Natural killer cell (primary cell): ENCODE measurements at regions of chr9 and their contacts with region 1.

Region 1: DNA sequence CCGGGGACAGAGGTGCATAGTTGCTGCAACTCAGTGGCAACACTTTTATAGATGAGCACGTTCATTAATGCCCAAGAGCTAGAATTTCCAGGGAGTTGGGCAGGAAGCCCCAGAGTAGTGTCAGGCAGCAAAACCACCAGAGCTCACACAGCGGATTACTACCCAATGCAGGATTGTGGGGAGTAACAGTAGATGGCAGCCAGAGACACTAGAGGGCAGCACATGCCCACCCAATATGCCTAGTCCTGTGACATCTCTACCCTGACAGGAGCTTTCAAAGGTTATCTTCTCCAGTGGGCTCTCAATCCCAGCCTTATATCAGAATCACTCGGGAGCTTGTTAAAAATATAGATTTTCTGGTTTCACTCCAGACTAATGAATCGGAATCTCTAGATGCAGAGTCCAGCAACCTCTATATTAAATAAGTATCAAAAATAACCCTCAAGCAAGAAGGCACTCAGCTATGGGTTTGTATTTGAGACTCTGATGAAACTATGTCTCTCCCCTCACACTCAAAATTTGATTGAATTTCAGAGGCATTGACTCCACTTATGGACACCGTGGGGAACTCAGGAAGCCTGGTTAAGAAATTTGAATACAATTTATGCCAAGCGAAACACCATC is 58.4 kb upstream of the PHF24 start:
- DNase-seq: peak; percentile 68 to 91
- ATAC-seq: peak; percentile 96 to 100 (median 100)
- H3K4me3 ChIP-seq: no peak overlapping the region
- H3K4me3 Mint-ChIP-seq: no peak overlapping the region
- H3K27ac ChIP-seq: no peak overlapping the region
- H3K27ac Mint-ChIP-seq: no peak overlapping the region
- H3K4me1 ChIP-seq: no peaks in the 10 kb centered on the region
- H3K4me1 Mint-ChIP-seq: no peaks in the 10 kb centered on the region
- H3K27me3 ChIP-seq: no peaks in the 10 kb centered on the region
- H3K27me3 Mint-ChIP-seq: peaks cover 15 to 41% of the 10 kb centered on the region in 2 donors
- CTCF ChIP-seq: peak; percentile 81

Region 2: DNA sequence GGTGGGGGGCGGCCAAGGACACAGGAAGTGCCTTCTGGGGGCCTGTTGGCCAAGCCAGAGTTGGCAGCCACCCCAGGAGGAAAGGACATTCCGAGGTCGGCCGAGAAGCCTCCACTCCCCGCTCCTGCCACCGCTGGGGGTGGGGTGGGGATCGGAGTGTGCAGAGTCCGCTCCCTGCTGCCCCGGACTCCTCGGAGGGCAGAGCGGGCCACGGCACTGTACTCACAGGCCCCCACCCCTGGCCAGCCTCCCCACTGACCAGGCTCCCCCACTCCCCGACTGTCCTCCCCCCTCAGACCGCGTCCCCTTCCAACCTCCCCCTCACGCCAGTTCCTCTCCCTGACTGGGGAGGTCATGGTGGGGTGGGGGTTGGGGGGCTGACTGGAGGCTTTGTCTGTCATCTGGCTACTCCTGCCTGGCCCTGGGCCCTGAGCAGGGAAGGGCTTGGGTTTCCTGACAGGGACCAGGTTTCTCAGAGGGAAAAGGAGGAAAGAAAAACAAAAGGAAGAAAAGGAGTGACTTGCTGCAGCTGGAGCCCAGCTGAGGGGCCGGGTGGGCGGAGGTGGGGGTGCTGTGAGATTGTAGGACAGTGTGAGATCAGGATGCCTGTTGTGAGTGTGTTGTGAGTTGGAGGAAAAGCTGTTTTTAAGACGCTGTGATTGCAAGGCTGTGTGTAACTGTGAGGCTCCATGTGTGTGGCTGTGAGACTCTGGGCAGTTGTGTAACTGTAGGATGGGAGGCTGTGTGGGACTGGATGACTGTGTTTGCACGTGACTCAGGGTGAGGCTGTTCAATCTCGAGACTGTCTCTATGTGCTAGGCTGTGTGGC is 339.8 kb before region 1 on chr9:
- intact Hi-C with region 1: no loop called
- DNase-seq: no peak
- ATAC-seq: no peak
- H3K4me3 ChIP-seq: no peak overlapping the region
- H3K4me3 Mint-ChIP-seq: no peak overlapping the region
- H3K27ac ChIP-seq: no peak overlapping the region
- H3K27ac Mint-ChIP-seq: no peak overlapping the region
- H3K4me1 ChIP-seq: no peaks in the 10 kb centered on the region
- H3K4me1 Mint-ChIP-seq: no peaks in the 10 kb centered on the region
- H3K27me3 ChIP-seq: peaks cover 3% of the 10 kb centered on the region
- H3K27me3 Mint-ChIP-seq: peaks cover 7 to 41% of the 10 kb centered on the region in 2 donors
- CTCF ChIP-seq: no peak

Region 3: GRCh38 chr9:34989003-34989945 is 89.6 kb after region 1 on chr9 and contains the start of gene DNAJB5:
- intact Hi-C with region 1: loop called (anchors 1 kb)
- DNase-seq: peak; percentile 99
- ATAC-seq: peak; percentile 94 to 99 (median 96)
- H3K4me3 ChIP-seq: peak within 1 kb of the TSS; percentile 73
- H3K4me3 Mint-ChIP-seq: peak within 1 kb of the TSS; percentile 98
- H3K27ac ChIP-seq: peak within 1 kb of the TSS; percentile 45
- H3K27ac Mint-ChIP-seq: peak within 1 kb of the TSS; percentile 83 to 84
- H3K4me1 ChIP-seq: peaks cover 35% of the 10 kb centered on the region
- H3K4me1 Mint-ChIP-seq: peaks cover 27 to 36% of the 10 kb centered on the region in 2 donors
- H3K27me3 ChIP-seq: no peaks in the 10 kb centered on the region
- H3K27me3 Mint-ChIP-seq: peaks cover 0 to 2% of the 10 kb centered on the region in 2 donors
- CTCF ChIP-seq: no peak
- total RNA-seq, gene DNAJB5: 1.1 to 2.4 (median 1.9) TPM

Region 4: GRCh38 chr9:35051069-35051967 is 151.7 kb after region 1 on chr9:
- intact Hi-C with region 1: loop called (anchors 1 kb)
- DNase-seq: peak in 1 of 2 donors; percentile 72
- ATAC-seq: peak; percentile 60 to 87 (median 69)
- H3K4me3 ChIP-seq: no peak overlapping the region
- H3K4me3 Mint-ChIP-seq: no peak overlapping the region
- H3K27ac ChIP-seq: no peak overlapping the region
- H3K27ac Mint-ChIP-seq: peak overlapping the region; percentile 21 to 58
- H3K4me1 ChIP-seq: no peaks in the 10 kb centered on the region
- H3K4me1 Mint-ChIP-seq: peaks cover 6 to 9% of the 10 kb centered on the region in 2 donors
- H3K27me3 ChIP-seq: no peaks in the 10 kb centered on the region
- H3K27me3 Mint-ChIP-seq: no peaks in the 10 kb centered on the region
- CTCF ChIP-seq: peak; percentile 69

Region 5: GRCh38 chr9:35096035-35096849 is 196.6 kb after region 1 on chr9 and contains the start of gene PIGO:
- intact Hi-C with region 1: loop called (anchors 1 kb)
- DNase-seq: peak; percentile 85 to 94
- ATAC-seq: peak; percentile 93 to 97 (median 94)
- H3K4me3 ChIP-seq: peak within 1 kb of the TSS; percentile 83
- H3K4me3 Mint-ChIP-seq: peak within 1 kb of the TSS; percentile 86
- H3K27ac ChIP-seq: peak within 1 kb of the TSS; percentile 95
- H3K27ac Mint-ChIP-seq: peak within 1 kb of the TSS; percentile 91 to 93
- H3K4me1 ChIP-seq: peaks cover 15% of the 10 kb centered on the region
- H3K4me1 Mint-ChIP-seq: peaks cover 19 to 37% of the 10 kb centered on the region in 2 donors
- H3K27me3 ChIP-seq: no peaks in the 10 kb centered on the region
- H3K27me3 Mint-ChIP-seq: no peaks in the 10 kb centered on the region
- CTCF ChIP-seq: peak; percentile 87
- total RNA-seq, gene PIGO: 23.6 to 28.2 (median 27.7) TPM

Region 6: DNA sequence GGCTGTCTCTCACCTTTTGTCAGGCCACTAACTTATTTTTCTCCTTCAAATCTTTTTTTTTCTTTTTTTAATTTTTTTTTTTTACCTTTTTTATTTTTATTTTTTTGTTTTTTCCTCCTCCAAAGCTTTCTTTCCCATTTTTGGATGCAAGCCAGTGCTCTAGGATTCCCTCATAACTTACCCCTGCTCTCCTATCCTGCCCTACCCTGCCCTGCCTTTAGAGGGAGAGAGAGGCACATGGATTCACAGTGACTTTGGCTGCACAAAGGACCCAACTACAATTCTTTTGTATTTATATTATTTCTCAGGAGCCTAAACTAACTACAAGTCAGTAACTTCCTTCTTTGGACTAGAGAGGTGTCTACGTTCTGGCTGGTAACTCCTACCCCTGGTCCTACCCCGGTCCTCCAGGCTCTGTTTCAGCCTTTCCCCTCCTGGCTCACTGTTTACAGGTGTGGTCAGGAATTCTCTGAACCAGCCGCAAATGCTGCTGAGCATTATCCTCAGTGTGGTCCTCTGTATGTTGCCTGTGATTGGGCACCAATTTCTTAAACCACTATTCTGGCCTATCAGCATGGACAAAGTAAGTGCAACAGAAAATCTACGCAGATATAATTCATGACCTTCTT is 581.8 kb after region 1 on chr9:
- intact Hi-C with region 1: loop called (anchors 1 kb)
- DNase-seq: peak in 1 of 2 donors; percentile 34
- ATAC-seq: peak in 1 of 3 donors; percentile 55
- H3K4me3 ChIP-seq: no peak overlapping the region
- H3K4me3 Mint-ChIP-seq: no peak overlapping the region
- H3K27ac ChIP-seq: no peak overlapping the region
- H3K27ac Mint-ChIP-seq: no peak overlapping the region
- H3K4me1 ChIP-seq: no peaks in the 10 kb centered on the region
- H3K4me1 Mint-ChIP-seq: no peaks in the 10 kb centered on the region
- H3K27me3 ChIP-seq: peaks cover 7% of the 10 kb centered on the region
- H3K27me3 Mint-ChIP-seq: peaks cover 4 to 15% of the 10 kb centered on the region in 2 donors
- CTCF ChIP-seq: peak; percentile 12

Region 7: GRCh38 chr9:35553670-35554543 is 654.3 kb after region 1 on chr9:
- intact Hi-C with region 1: loop called (anchors 10 kb)
- DNase-seq: peak in 1 of 2 donors; percentile 57
- ATAC-seq: peak in 2 of 3 donors; percentile 70 to 73
- H3K4me3 ChIP-seq: no peak overlapping the region
- H3K4me3 Mint-ChIP-seq: no peak overlapping the region
- H3K27ac ChIP-seq: no peak overlapping the region
- H3K27ac Mint-ChIP-seq: no peak overlapping the region
- H3K4me1 ChIP-seq: no peaks in the 10 kb centered on the region
- H3K4me1 Mint-ChIP-seq: peaks cover 0 to 8% of the 10 kb centered on the region in 2 donors
- H3K27me3 ChIP-seq: no peaks in the 10 kb centered on the region
- H3K27me3 Mint-ChIP-seq: peaks cover 0 to 3% of the 10 kb centered on the region in 2 donors
- CTCF ChIP-seq: peak; percentile 32